ENCODE measurements at regions of chr15 and their contacts with region 1.

Region 1: GRCh38 chr15:68304589-68305337 is 27.2 kb downstream of the FEM1B start:
- DNase-seq: no peak
- ATAC-seq: no peak
- H3K4me3 ChIP-seq: no peak overlapping the region
- H3K27ac ChIP-seq: no peak overlapping the region
- H3K4me1 ChIP-seq: peaks cover 2% of the 10 kb centered on the region
- H3K27me3 ChIP-seq: no peaks in the 10 kb centered on the region
- CTCF ChIP-seq: no peak

Region 2: DNA sequence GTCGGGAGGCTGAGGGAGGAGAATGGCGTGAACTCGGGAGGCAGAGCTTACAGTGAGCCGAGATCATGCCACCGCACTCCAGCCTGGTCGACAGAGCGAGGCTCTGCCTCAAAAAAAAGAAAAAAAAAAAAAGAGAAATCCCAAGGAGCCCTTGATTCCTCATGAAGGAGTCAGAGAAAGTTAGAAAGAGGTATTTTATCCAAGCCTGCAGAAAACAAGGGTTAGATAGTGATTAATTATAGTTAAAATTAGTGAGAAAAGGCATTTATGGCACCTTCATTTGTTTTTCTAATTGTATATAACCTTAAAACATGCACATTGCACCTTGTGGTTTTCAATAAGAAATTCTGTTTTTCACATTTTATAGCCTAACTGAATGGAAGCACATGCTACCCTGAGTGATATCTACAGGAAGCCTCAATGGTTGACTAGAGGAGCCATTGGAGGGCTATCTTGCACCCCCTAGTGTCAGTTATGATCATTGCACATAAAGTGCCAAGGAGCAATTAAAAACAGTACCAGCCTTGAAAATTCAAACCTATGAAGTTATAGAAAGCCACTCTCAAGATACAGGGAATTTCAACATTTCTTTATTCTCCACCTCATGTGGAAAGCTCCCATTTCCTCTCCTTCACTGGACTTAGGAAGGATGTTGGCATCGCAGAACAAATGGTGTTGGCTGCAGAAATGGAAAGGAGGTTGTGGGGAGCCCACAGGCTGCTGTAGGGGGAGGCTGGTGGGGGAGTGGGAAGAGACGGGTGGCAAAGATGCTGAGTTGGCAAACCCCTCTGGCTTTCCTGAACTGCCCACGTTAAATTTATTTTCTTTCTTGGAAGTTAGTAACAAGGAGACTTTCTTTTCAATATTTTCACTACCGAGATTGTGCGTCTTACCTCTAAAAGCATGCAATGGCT is 78.7 kb after region 1 on chr15:
- intact Hi-C with region 1: loop called (anchors 5 kb)
- DNase-seq: peak; percentile 13
- ATAC-seq: peak; percentile 89
- H3K4me3 ChIP-seq: no peak overlapping the region
- H3K27ac ChIP-seq: no peak overlapping the region
- H3K4me1 ChIP-seq: no peaks in the 10 kb centered on the region
- H3K27me3 ChIP-seq: no peaks in the 10 kb centered on the region
- CTCF ChIP-seq: peak; percentile 81

Region 3: GRCh38 chr15:68526269-68526668 is 221.5 kb after region 1 on chr15:
- intact Hi-C with region 1: no loop called
- DNase-seq: no peak
- ATAC-seq: no peak
- H3K4me3 ChIP-seq: no peak overlapping the region
- H3K27ac ChIP-seq: no peak overlapping the region
- H3K4me1 ChIP-seq: no peaks in the 10 kb centered on the region
- H3K27me3 ChIP-seq: no peaks in the 10 kb centered on the region
- CTCF ChIP-seq: no peak

Region 4: GRCh38 chr15:68559345-68560310 is 254.9 kb after region 1 on chr15:
- intact Hi-C with region 1: loop called (anchors 10 kb)
- DNase-seq: peak; percentile 91
- ATAC-seq: peak; percentile 96
- H3K4me3 ChIP-seq: peak overlapping the region; percentile 46
- H3K27ac ChIP-seq: no peak overlapping the region
- H3K4me1 ChIP-seq: peaks cover 9% of the 10 kb centered on the region
- H3K27me3 ChIP-seq: peaks cover 17% of the 10 kb centered on the region
- CTCF ChIP-seq: peak; percentile 97